Posterior vena cava (tissue), 2 donors: ENCODE measurements at regions of chr2 and their contacts with region 1.

Region 1: GRCh38 chr2:216698895-216699294 is 3.5 kb upstream of the IGFBP5 start:
- DNase-seq: no peak

Region 2: GRCh38 chr2:216742411-216742810 is 43.5 kb after region 1 on chr2:
- intact Hi-C with region 1: loop called in 1 of 2 experiments (anchors 1 kb)
- DNase-seq: no peak

Region 3: GRCh38 chr2:217105733-217106649 is 407.1 kb after region 1 on chr2:
- intact Hi-C with region 1: loop called in 1 of 2 experiments (anchors 10 kb)
- DNase-seq: peak; percentile 82

Region 4: DNA sequence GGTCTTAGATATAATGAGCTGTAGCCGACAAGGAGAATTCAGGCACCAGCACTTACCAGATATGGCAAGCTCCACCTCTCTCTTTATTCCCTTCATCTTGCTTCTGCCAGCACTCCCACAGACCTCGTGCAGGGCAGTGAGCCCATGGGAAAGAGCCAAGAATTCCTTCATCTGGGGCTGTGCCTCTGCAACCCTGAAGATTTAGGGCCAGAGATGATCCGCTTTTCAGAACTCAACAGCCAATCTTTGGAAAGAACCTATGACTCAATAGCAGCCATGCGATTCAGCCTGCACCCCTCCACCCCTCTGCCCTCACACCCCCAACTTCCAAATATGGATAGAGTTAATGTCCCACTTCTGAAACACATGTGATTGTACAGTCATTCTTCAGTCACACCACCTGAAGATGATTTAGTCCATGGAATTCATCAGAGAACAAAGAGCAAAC is 694.7 kb after region 1 on chr2:
- intact Hi-C with region 1: loop called in 1 of 2 experiments (anchors 10 kb)
- DNase-seq: peak; percentile 91

Region 5: DNA sequence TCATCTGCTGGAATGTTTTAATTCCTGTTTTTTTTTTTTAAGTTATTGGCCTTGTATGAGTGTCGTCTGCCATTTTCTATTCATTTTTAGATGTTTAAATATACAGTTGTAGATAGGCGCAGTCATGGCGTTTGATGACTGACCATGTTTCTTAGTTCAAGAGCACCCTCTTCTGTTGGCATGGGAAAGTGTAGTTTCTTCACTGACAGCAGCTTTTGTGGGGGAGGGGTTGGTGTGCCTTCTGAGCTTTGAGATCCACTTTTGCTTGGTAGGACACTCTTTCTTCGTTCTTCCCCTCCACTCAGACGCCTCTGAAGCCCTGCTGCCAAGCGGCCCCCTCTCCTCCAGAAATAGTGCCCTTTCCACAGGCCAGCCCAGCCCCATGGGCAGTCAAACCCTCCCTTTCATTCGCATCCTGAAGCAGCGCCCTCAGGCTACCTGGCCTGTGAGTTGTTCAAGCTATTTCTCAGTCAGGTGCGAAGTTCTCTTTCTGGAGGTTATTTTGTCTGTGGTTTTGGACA is 811.9 kb after region 1 on chr2:
- intact Hi-C with region 1: loop called (anchors 5 to 10 kb)
- DNase-seq: no peak

Region 6: DNA sequence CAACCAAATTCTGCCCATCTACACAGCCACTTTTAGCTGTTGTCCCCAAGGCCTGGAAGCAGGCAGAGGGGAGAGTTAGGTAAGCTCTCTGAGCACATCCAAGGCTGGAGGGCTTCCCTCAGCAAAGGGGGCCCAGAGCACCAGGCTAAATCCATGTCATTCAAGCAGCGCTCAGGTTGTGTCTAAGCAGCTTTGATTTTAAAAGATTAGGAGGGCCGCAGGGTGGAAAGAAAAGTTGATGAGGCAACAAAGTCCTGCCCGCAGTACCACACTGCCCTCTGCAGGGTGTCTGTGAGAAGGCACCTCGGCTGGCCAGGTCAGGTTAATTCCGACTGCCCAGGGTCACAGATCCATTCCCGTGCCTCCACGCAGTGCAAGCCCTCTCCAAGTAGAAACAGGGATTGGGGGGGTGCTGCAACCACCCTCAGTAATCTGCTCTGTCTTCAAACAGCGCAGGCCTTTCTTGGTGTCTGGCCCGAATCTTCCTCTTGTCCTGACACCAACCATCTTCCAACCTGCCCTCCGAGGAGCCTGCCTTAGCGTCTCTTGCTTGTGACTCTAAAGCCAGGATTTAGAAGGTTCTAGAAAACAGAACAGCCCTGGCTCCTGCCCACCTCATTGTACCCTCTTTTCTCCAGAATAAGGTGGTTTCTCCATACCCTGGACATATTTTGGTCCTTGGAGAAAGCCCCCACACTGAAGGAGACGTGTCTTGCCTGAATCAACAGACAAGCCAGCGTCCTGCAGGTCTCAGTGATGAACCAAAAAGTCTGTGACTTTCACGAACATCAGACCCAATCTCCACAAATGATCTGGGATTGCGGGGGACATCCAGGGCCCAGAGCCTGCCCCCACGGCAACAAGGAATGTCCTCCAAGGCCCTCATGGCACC is 1014.7 kb after region 1 on chr2:
- intact Hi-C with region 1: loop called in 1 of 2 experiments (anchors 5 kb)
- DNase-seq: peak; percentile 91